Panc1 (cell line): ENCODE measurements at regions of chr10 and their contacts with region 1.

Region 1: GRCh38 chr10:23525406-23525805 is 86.5 kb downstream of the OTUD1 start:
- DNase-seq: no peak
- ATAC-seq: no peak; the same call in 1 of the 2 replicates
- H3K4me3 ChIP-seq: no peak overlapping the region
- H3K27ac ChIP-seq: no peak overlapping the region
- H3K4me1 ChIP-seq: no peaks in the 10 kb centered on the region
- H3K27me3 ChIP-seq: no peaks in the 10 kb centered on the region
- CTCF ChIP-seq: peak; percentile 51

Region 2: GRCh38 chr10:23314835-23315239 is 210.6 kb before region 1 on chr10:
- CTCF ChIA-PET with region 1: no interaction called
- POLR2A ChIA-PET with region 1: no interaction called
- in situ Hi-C with region 1: no loop called
- intact Hi-C with region 1: loop called (anchors 2 kb)
- DNase-seq: no peak
- ATAC-seq: no peak
- H3K4me3 ChIP-seq: no peak overlapping the region
- H3K27ac ChIP-seq: no peak overlapping the region
- H3K4me1 ChIP-seq: no peaks in the 10 kb centered on the region
- H3K27me3 ChIP-seq: peaks cover 2% of the 10 kb centered on the region; the same call in 1 of the 2 replicates
- CTCF ChIP-seq: peak; percentile 60; the same call in 1 of the 2 replicates